Astrocyte of the cerebellum (primary cell): ENCODE measurements at regions of chr4 and their contacts with region 1.

Region 1: GRCh38 chr4:75989846-75990528 is 758 bp downstream of the SDAD1 start:
- DNase-seq: no peak
- H3K4me3 ChIP-seq: peak overlapping the region; percentile 81
- CTCF ChIP-seq: no peak

Region 2: GRCh38 chr4:75908555-75908954 is 81.4 kb before region 1 on chr4:
- in situ Hi-C with region 1: no loop called
- DNase-seq: no peak
- H3K4me3 ChIP-seq: no peak overlapping the region
- CTCF ChIP-seq: no peak

Region 3: DNA sequence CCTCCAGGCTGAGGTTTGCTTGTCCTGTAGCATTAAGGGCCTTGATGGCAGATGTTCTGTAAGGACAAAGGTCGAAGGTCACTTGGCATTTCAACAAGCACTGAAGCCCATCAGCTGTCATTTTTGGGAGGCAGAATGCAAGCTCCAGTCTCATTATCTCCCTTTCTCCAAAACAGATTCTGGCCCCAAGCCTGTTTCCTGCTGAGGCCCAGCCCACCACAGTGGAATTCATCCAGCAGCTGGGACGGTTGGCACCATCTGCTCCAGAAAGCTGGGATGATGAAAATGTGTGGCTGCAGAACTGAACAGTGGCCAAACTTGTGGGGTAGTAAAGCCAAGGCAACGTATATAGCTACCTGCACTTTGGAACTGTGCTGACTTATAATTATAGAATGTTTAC is 70.1 kb before region 1 on chr4:
- in situ Hi-C with region 1: no loop called
- DNase-seq: peak; percentile 67
- H3K4me3 ChIP-seq: no peak overlapping the region
- CTCF ChIP-seq: no peak

Region 4: DNA sequence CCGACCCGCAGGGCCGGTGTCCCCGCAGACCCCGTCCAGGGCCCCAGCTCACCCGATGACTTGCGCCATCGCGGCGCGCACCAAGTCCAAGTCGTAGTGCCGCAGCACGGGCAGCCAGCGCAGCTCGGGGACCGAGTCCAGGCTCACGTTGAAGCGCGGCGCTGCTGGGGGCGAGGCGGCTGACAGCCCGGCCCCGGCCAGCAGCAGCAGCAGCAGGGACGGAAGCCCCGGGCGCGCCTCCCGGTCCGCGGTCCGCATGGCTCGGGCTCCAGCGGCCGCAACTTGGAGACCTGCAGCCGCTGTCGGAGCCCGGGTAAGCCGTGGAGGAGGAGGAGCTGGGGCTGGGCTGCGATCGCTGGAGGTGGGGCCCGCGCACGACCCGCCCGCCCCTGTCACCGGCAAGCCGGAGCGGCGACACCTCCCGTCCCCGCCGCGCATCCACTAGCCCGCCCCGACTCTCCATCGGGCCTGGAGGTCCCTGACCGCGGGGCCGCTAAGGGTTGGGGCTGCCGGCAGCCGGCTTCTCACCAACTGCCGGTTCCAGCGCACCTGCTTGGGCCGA is 49.2 kb before region 1 on chr4 and contains the start of gene NAAA:
- in situ Hi-C with region 1: no loop called
- DNase-seq: peak; percentile 39
- H3K4me3 ChIP-seq: peak within 1 kb of the TSS; percentile 74
- CTCF ChIP-seq: no peak

Region 5: DNA sequence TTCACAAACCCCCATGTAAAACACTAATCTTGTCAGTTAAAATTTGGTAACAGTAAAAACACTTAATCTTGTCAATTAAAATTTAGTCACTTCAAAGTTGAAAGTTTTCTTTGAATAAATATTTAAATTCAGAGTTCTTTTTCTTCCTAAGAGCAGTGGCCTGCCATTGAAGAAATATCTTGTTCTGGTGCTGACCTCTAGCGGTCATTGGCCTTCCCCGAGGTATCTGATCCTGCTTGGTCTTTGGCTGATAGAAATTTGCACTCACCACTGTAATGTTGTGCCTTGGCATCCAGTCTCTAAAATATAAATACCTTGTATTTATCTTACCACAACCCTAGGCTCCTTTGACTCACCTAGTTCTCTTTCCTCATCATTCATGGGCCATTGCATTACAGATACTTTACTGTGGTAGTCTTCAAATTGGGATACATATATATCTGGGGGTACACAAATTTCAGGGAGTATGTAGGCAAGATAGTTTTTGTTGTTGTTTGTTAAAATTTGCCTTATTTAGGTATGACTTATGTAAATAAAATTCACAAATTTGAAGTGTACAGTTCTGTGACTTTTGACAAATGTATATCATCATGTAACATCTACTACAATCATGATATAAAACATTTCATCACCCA is 77.8 kb after region 1 on chr4:
- in situ Hi-C with region 1: no loop called
- DNase-seq: peak; percentile 61
- H3K4me3 ChIP-seq: no peak overlapping the region
- CTCF ChIP-seq: peak; percentile 90

Region 6: DNA sequence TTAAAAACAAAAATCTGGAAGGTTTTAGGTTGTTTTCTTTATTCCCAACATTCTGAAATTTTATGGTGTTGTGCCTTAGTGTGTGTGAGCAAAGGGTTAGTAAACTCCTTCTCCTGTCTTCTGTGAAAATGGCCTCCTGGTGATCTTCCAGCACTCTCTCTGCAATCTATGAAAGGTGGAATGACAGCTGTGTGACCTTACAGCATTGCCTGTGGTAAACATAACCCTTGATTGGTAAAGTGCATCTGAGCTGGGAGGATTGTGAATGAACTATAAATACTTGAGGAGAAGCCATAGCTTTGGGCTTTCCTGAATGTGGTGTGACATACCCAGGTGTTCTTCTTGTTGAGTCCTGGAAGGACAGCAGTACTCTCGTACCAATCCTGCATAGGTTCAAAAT is 94.6 kb after region 1 on chr4:
- in situ Hi-C with region 1: loop called (anchors 5 kb)
- DNase-seq: no peak
- H3K4me3 ChIP-seq: no peak overlapping the region
- CTCF ChIP-seq: no peak